Panc1 (cell line): ENCODE measurements at regions of chr1 and their contacts with region 1.

Region 1: DNA sequence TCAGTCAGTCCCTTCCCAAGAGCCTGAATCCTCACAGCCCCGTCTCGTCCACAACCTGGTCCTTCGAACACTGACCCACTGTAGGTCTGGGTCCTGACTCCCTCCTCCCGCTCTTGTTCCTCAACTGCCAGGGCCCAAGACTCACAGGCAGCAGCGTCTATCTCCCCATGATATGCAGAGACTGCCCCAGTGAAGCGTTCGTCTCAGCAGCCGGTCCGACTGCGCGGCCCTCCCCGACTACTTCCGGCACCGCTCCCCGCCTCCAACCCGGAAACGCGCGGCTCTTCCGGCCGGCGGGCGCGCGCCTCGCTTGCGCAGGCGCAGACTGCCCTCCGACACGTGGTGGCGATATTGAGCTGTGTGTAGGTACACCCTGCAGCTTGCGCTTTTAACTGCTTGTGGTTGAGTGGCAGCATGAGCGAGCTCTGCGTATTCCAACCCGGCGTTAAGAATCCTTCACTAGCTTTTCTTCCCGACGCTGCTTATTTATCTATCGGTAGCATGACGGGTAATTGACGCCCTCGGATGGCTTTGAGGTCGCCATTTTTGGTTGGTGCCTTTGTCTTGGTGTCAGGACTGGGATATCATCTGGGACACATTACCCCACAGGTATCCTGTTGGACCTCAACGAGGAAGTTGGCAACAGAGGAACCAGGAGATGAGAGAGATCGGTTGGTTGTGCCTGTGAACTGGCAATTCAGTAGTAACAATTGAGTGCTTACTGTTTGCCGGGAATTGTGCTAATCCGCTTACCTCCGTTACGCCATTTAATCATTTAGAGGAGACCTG is at the start of gene TAF12:
- DNase-seq: peak; percentile 87
- ATAC-seq: peak; percentile 96
- H3K4me3 ChIP-seq: peak within 1 kb of the TSS; percentile 78 to 88
- H3K27ac ChIP-seq: peak within 1 kb of the TSS; percentile 95
- H3K4me1 ChIP-seq: peaks cover 7% of the 10 kb centered on the region; the same call in 1 of the 2 replicates
- H3K27me3 ChIP-seq: no peaks in the 10 kb centered on the region
- CTCF ChIP-seq: peak; percentile 75
- total RNA-seq, gene TAF12: 33.9 TPM

Region 2: DNA sequence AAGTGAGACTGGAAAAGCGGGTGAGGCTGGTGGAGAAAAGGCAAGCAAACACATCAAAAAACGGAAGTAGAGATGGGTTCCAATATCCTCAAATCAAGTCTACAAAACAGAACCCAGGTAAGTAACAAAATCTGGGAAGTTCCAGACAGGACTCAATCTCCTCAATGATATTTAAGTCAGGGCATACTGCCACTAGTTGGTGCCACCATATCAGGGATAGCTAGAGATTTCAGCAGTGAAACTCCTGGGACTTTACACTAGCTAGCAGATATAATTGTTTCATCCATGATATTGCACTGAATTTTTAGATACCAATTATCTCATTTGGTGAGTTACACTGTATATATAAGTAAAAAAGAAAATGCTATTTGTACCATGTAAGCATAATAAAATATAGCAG is 606.6 kb before region 1 on chr1:
- CTCF ChIA-PET with region 1: no interaction called
- POLR2A ChIA-PET with region 1: no interaction called
- in situ Hi-C with region 1: no loop called
- intact Hi-C with region 1: no loop called
- DNase-seq: no peak
- ATAC-seq: no peak
- H3K4me3 ChIP-seq: no peak overlapping the region
- H3K27ac ChIP-seq: no peak overlapping the region
- H3K4me1 ChIP-seq: no peaks in the 10 kb centered on the region
- H3K27me3 ChIP-seq: no peaks in the 10 kb centered on the region
- CTCF ChIP-seq: peak; percentile 54

Region 3: GRCh38 chr1:28417429-28417922 is 225.6 kb before region 1 on chr1:
- CTCF ChIA-PET with region 1: no interaction called
- POLR2A ChIA-PET with region 1: interaction called, 12 read pairs
- in situ Hi-C with region 1: no loop called
- intact Hi-C with region 1: no loop called
- DNase-seq: peak; percentile 85
- ATAC-seq: peak; percentile 79
- H3K4me3 ChIP-seq: no peak overlapping the region
- H3K27ac ChIP-seq: peak overlapping the region; percentile 29; the same call in 1 of the 2 replicates
- H3K4me1 ChIP-seq: peaks cover 8% of the 10 kb centered on the region; the same call in 1 of the 2 replicates
- H3K27me3 ChIP-seq: no peaks in the 10 kb centered on the region
- CTCF ChIP-seq: no peak

Region 4: DNA sequence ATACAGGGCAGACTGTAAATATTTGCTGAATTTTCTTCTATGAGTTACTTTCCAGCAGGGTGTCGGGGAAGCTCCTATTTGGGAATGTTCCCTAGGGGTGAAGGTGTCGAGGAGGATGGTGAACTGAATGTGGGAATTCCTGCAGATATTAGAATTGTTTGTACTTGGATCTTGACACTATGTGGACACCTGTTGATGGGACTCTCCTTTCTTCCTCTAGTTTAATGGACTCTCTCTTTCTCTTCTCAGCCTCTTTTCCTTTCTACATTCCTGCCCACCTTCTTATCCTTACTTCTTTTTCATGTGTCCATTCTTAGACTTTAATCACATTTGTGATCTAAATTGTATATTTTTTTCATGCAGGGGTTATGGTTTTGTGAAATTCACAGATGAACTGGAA is 76.1 kb before region 1 on chr1:
- CTCF ChIA-PET with region 1: interaction called, 21 read pairs
- POLR2A ChIA-PET with region 1: no interaction called
- in situ Hi-C with region 1: no loop called
- intact Hi-C with region 1: no loop called
- DNase-seq: no peak
- ATAC-seq: no peak
- H3K4me3 ChIP-seq: no peak overlapping the region
- H3K27ac ChIP-seq: no peak overlapping the region
- H3K4me1 ChIP-seq: no peaks in the 10 kb centered on the region
- H3K27me3 ChIP-seq: no peaks in the 10 kb centered on the region
- CTCF ChIP-seq: no peak

Region 5: DNA sequence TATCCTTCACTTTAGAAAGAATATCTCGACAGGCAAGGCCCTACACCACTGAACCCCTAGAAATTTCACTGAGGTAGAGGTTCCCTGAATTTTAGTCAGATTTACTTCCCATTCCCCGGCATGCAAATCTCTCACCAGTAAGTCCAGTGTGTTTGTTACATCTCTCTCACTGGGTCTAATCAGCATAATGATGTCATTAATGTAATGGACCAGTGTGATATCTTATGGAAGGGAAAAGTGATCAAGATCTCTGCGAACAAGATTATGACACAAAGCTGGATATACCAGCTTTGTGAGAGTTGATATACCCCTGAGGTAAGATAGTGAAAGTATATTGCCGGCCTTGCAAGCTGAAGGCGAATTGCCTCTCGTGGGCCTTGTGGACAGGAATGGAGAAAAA is 13.3 kb after region 1 on chr1:
- CTCF ChIA-PET with region 1: no interaction called
- POLR2A ChIA-PET with region 1: interaction called, 11 read pairs
- in situ Hi-C with region 1: no loop called
- intact Hi-C with region 1: no loop called
- DNase-seq: no peak
- ATAC-seq: no peak
- H3K4me3 ChIP-seq: no peak overlapping the region
- H3K27ac ChIP-seq: no peak overlapping the region
- H3K4me1 ChIP-seq: no peaks in the 10 kb centered on the region
- H3K27me3 ChIP-seq: no peaks in the 10 kb centered on the region
- CTCF ChIP-seq: no peak

Region 6: DNA sequence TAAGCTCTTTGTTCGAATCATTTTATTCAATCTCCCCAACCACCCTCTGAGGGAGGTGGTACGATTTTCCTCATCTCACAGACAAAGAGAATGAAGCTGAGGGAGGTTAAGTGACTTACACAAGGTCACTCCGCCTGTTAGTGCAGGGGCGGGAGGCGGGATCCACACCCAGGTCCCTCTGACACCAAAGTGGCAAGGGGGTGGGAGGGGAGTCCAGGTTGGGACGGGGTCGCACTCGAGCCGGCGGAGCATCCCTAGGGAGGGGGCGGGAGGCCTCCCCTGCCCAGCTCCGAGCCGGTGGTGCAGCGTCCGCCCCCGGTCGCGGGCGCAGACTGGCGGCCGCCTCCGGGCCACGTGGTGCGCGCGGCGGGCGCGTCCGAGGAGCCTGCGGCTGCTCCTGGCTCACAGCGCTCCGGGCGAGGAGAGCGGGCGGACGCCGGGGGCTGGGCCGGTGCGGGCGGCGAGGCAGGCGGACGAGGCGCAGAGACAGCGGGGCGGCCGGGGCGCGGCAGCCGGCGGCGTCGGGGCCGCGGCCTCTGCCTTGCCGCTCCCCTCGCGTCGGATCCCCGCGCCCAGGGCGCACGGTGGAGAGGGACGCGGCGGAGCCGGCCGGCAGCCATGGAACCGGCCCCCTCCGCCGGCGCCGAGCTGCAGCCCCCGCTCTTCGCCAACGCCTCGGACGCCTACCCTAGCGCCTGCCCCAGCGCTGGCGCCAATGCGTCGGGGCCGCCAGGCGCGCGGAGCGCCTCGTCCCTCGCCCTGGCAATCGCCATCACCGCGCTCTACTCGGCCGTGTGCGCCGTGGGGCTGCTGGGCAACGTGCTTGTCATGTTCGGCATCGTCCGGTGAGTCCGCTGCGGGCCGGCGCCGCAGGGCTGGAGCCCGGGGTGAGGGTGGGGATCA is 169.0 kb after region 1 on chr1 and contains the start of gene OPRD1:
- CTCF ChIA-PET with region 1: no interaction called
- POLR2A ChIA-PET with region 1: no interaction called
- in situ Hi-C with region 1: no loop called
- intact Hi-C with region 1: no loop called
- DNase-seq: no peak
- ATAC-seq: peak; percentile 52
- H3K4me3 ChIP-seq: peak within 1 kb of the TSS; percentile 24 to 25; a peak in 2 of 4 replicates
- H3K27ac ChIP-seq: no peak within 1 kb of the TSS
- H3K4me1 ChIP-seq: peaks cover 20% of the 10 kb centered on the region
- H3K27me3 ChIP-seq: peaks cover 9% of the 10 kb centered on the region
- CTCF ChIP-seq: no peak
- total RNA-seq, gene OPRD1: 5.4 TPM

Region 7: GRCh38 chr1:28877132-28877781 is 234.2 kb after region 1 on chr1:
- CTCF ChIA-PET with region 1: interaction called, 10 read pairs
- POLR2A ChIA-PET with region 1: no interaction called
- in situ Hi-C with region 1: no loop called
- intact Hi-C with region 1: loop called (anchors 10 kb)
- DNase-seq: peak; percentile 74
- ATAC-seq: peak; percentile 89
- H3K4me3 ChIP-seq: no peak overlapping the region
- H3K27ac ChIP-seq: no peak overlapping the region
- H3K4me1 ChIP-seq: no peaks in the 10 kb centered on the region
- H3K27me3 ChIP-seq: no peaks in the 10 kb centered on the region
- CTCF ChIP-seq: peak; percentile 90